Dendritic cell treated with granulocyte-macrophage colony-stimulating factor and Interleukin-4, amounts not matched to agents 40 ng/mL and 50 ng/mL, for 4 days (primary cell): ENCODE measurements at regions of chr9 and their contacts with region 1.

Region 1: DNA sequence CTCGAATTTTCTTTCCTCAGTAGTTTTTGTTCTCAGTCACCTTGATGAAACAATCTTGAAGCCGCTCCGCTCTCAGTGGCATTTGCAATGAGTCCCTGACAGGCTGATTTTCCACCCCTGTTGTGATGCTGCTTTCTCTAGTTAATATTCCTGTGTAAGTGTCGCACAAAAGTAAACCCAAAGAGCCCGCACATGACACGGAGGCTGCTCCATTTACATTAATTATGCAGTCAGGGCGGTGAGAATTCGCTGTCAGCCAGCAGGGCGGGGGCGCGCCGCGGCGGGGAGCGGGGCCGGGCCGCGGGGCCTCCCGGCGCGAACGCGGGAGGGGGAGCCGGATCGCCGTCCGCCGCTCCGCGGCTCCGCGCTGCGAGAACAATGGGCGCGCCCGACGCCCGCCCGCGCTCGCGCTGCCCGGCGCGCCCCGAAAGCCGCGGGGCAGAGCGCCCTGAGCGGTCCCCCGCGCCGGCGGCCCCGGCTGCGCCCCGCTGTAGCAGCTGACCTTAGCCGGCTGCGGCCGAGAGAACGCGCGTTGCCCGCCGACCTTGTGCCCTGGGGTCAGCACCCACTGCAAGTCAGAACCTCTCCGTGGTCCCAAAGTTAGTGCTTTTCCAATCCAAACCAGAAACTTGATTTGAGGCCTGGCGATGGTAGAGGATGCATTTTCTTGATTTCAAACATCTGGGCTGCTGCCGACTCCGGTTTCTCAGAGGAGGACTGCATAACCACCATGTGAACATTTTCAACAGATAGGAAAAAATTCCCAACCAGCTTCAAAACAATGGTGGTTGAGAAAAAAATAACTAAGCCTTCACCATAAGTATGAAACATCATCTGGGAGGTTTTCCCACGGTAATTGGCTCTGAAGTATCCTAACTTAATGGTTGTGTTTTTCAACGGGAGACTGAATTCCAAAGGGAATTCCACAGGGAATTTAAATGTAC is 142.6 kb downstream of the PBX3 start:
- H3K4me3 Mint-ChIP-seq: peak overlapping the region; percentile 72
- H3K27ac Mint-ChIP-seq: no peak overlapping the region
- H3K4me1 Mint-ChIP-seq: peaks cover 13% of the 10 kb centered on the region
- H3K27me3 Mint-ChIP-seq: peaks cover 25% of the 10 kb centered on the region

Region 2: GRCh38 chr9:125767349-125767748 is 122.4 kb before region 1 on chr9:
- intact Hi-C with region 1: loop called (anchors 5 kb)
- H3K4me3 Mint-ChIP-seq: no peak overlapping the region
- H3K27ac Mint-ChIP-seq: no peak overlapping the region
- H3K4me1 Mint-ChIP-seq: peaks cover 23% of the 10 kb centered on the region
- H3K27me3 Mint-ChIP-seq: no peaks in the 10 kb centered on the region

Region 3: GRCh38 chr9:125829743-125830142 is 60.0 kb before region 1 on chr9:
- intact Hi-C with region 1: loop called (anchors 10 kb)
- H3K4me3 Mint-ChIP-seq: peak overlapping the region; percentile 64
- H3K27ac Mint-ChIP-seq: no peak overlapping the region
- H3K4me1 Mint-ChIP-seq: peaks cover 4% of the 10 kb centered on the region
- H3K27me3 Mint-ChIP-seq: no peaks in the 10 kb centered on the region